B cell (primary cell): ENCODE measurements at regions of chr3 and their contacts with region 1.

Region 1: GRCh38 chr3:185764163-185764979 is 60.5 kb downstream of the IGF2BP2 start:
- DNase-seq: no peak
- ATAC-seq: no peak
- H3K4me3 ChIP-seq: no peak overlapping the region
- H3K4me3 Mint-ChIP-seq: no peak overlapping the region
- H3K27ac ChIP-seq: no peak overlapping the region
- H3K27ac Mint-ChIP-seq: no peak overlapping the region
- H3K4me1 ChIP-seq: no peaks in the 10 kb centered on the region
- H3K4me1 Mint-ChIP-seq: no peaks in the 10 kb centered on the region
- H3K27me3 ChIP-seq: peaks cover 0 to 8% (median 3%) of the 10 kb centered on the region in 4 experiments
- H3K27me3 Mint-ChIP-seq: peaks cover 32% of the 10 kb centered on the region
- CTCF ChIP-seq: no peak

Region 2: GRCh38 chr3:185646382-185647133 is 117.8 kb before region 1 on chr3:
- CTCF ChIA-PET with region 1: no interaction called
- POLR2A ChIA-PET with region 1: no interaction called
- intact Hi-C with region 1: no loop called
- DNase-seq: peak; percentile 64
- ATAC-seq: peak; percentile 54
- H3K4me3 ChIP-seq: no peak overlapping the region
- H3K4me3 Mint-ChIP-seq: peak overlapping the region; percentile 37
- H3K27ac ChIP-seq: no peak overlapping the region
- H3K27ac Mint-ChIP-seq: no peak overlapping the region
- H3K4me1 ChIP-seq: peaks cover 0 to 11% of the 10 kb centered on the region in 2 donors
- H3K4me1 Mint-ChIP-seq: peaks cover 9% of the 10 kb centered on the region
- H3K27me3 ChIP-seq: no peaks in the 10 kb centered on the region
- H3K27me3 Mint-ChIP-seq: no peaks in the 10 kb centered on the region
- CTCF ChIP-seq: no peak

Region 3: GRCh38 chr3:185677146-185677829 is 87.1 kb before region 1 on chr3:
- CTCF ChIA-PET with region 1: interaction called, 12 read pairs
- POLR2A ChIA-PET with region 1: no interaction called
- intact Hi-C with region 1: no loop called
- DNase-seq: peak; percentile 19
- ATAC-seq: no peak
- H3K4me3 ChIP-seq: no peak overlapping the region
- H3K4me3 Mint-ChIP-seq: no peak overlapping the region
- H3K27ac ChIP-seq: no peak overlapping the region
- H3K27ac Mint-ChIP-seq: no peak overlapping the region
- H3K4me1 ChIP-seq: no peaks in the 10 kb centered on the region
- H3K4me1 Mint-ChIP-seq: no peaks in the 10 kb centered on the region
- H3K27me3 ChIP-seq: peaks cover 0 to 3% (median 0%) of the 10 kb centered on the region in 4 experiments
- H3K27me3 Mint-ChIP-seq: peaks cover 18% of the 10 kb centered on the region
- CTCF ChIP-seq: peak; percentile 33

Region 4: GRCh38 chr3:185779461-185779860 is 15.1 kb after region 1 on chr3:
- CTCF ChIA-PET with region 1: interaction called, 31 read pairs
- POLR2A ChIA-PET with region 1: no interaction called
- intact Hi-C with region 1: no loop called
- DNase-seq: no peak
- ATAC-seq: no peak
- H3K4me3 ChIP-seq: no peak overlapping the region
- H3K4me3 Mint-ChIP-seq: no peak overlapping the region
- H3K27ac ChIP-seq: no peak overlapping the region
- H3K27ac Mint-ChIP-seq: no peak overlapping the region
- H3K4me1 ChIP-seq: no peaks in the 10 kb centered on the region
- H3K4me1 Mint-ChIP-seq: no peaks in the 10 kb centered on the region
- H3K27me3 ChIP-seq: no peaks in the 10 kb centered on the region
- H3K27me3 Mint-ChIP-seq: peaks cover 15% of the 10 kb centered on the region
- CTCF ChIP-seq: no peak

Region 5: GRCh38 chr3:186599142-186599784 is 834.9 kb after region 1 on chr3:
- CTCF ChIA-PET with region 1: no interaction called
- POLR2A ChIA-PET with region 1: no interaction called
- intact Hi-C with region 1: no loop called
- DNase-seq: no peak
- ATAC-seq: no peak
- H3K4me3 ChIP-seq: no peak overlapping the region
- H3K4me3 Mint-ChIP-seq: no peak overlapping the region
- H3K27ac ChIP-seq: no peak overlapping the region
- H3K27ac Mint-ChIP-seq: no peak overlapping the region
- H3K4me1 ChIP-seq: no peaks in the 10 kb centered on the region
- H3K4me1 Mint-ChIP-seq: no peaks in the 10 kb centered on the region
- H3K27me3 ChIP-seq: no peaks in the 10 kb centered on the region
- H3K27me3 Mint-ChIP-seq: peaks cover 12% of the 10 kb centered on the region
- CTCF ChIP-seq: no peak